PC-9 (cell line): ENCODE measurements at regions of chr9 and their contacts with region 1.

Region 1: DNA sequence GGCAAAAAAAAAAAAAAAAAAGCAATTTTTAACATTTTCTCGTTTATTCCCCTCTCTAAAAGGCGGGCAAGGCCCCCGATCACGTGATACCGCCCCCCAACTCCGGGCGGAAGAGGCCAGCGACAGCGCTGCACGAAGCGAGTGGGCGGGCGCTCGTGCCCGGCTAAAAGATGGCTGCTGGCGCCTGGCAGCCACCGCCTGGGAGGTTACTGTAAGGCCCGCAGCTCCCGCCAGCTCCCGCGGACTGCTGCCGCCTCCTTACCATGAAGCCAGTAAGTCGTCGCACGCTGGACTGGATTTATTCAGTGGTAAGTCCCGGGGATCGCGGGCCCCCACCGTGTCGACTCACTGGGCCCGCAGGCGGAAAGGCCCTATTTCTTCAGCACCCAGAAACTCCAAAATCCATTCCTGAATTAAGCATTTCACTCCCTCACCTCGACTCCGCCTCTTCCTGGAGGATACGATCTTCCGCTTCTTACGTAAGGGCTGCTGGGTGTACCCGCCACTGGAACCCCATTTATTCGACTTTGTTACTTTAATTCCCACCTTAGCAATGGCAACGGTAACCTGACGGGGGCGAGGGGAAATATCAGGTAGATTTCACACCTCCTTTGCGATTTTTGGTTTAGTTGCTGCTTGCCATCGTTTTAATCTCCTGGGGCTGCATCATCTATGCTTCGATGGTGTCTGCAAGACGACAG is at the starts of genes SMIM27 and TOPORS:
- DNase-seq: peak; percentile 74 to 76
- H3K4me3 ChIP-seq: peak within 1 kb of the TSS; percentile 95
- H3K27ac ChIP-seq: peak within 1 kb of the TSS; percentile 77
- H3K4me1 ChIP-seq: peaks cover 15% of the 10 kb centered on the region
- H3K27me3 ChIP-seq: no peaks in the 10 kb centered on the region
- CTCF ChIP-seq: no peak
- total RNA-seq, gene SMIM27: 8.0 and 8.2 TPM in 2 replicates
- total RNA-seq, gene TOPORS: 8.0 and 11.1 TPM in 2 replicates

Region 2: GRCh38 chr9:32394381-32395049 is 157.8 kb before region 1 on chr9:
- CTCF ChIA-PET with region 1: no interaction called
- POLR2A ChIA-PET with region 1: no interaction called
- intact Hi-C with region 1: no loop called
- DNase-seq: no peak
- H3K4me3 ChIP-seq: no peak overlapping the region
- H3K27ac ChIP-seq: no peak overlapping the region
- H3K4me1 ChIP-seq: 0 out of 2 replicates have a peak, but pooled peaks cover 5% of the 10 kb centered on the region
- H3K27me3 ChIP-seq: no peaks in the 10 kb centered on the region
- CTCF ChIP-seq: no peak

Region 3: DNA sequence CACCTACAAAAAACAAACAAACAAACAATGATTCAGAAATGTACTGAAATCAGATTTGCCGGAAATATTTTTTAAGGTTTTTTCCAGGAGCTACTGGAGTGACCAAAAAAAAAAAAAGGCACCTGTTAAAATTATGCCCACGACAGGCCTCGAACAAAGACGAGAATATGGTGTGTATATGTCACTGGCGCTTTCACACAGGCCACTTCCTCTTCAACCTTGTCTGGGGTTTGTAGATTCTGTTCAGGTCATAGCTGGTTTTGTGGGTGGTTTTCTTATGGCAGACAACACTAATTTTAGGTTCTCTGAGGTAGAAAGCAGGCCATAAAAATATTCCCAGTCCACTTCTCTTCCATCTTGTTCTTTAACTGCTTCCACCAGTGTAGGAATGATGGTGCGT is 13.6 kb after region 1 on chr9:
- CTCF ChIA-PET with region 1: no interaction called
- POLR2A ChIA-PET with region 1: interaction called, 18 read pairs
- intact Hi-C with region 1: no loop called
- DNase-seq: no peak
- H3K4me3 ChIP-seq: no peak overlapping the region
- H3K27ac ChIP-seq: no peak overlapping the region
- H3K4me1 ChIP-seq: peaks cover 1% of the 10 kb centered on the region; the same call in 1 of the 2 replicates
- H3K27me3 ChIP-seq: no peaks in the 10 kb centered on the region
- CTCF ChIP-seq: no peak

Region 4: GRCh38 chr9:32716946-32717543 is 164.7 kb after region 1 on chr9:
- CTCF ChIA-PET with region 1: no interaction called
- POLR2A ChIA-PET with region 1: no interaction called
- intact Hi-C with region 1: no loop called
- DNase-seq: no peak
- H3K4me3 ChIP-seq: no peak overlapping the region
- H3K27ac ChIP-seq: no peak overlapping the region
- H3K4me1 ChIP-seq: no peaks in the 10 kb centered on the region
- H3K27me3 ChIP-seq: no peaks in the 10 kb centered on the region
- CTCF ChIP-seq: no peak